Gastrocnemius medialis (tissue), 4 donors: ENCODE measurements at regions of chr1 and their contacts with region 1.

Region 1: GRCh38 chr1:236659792-236660587 is 26.3 kb upstream of the ACTN2 start:
- DNase-seq: no peak
- ATAC-seq: peak; percentile 56 to 76
- H3K4me3 ChIP-seq: no peak overlapping the region
- H3K27ac ChIP-seq: peak overlapping the region; percentile 70 to 80 (median 76)
- H3K4me1 ChIP-seq: peaks cover 11 to 14% of the 10 kb centered on the region in 2 donors
- H3K27me3 ChIP-seq: no peaks in the 10 kb centered on the region
- CTCF ChIP-seq: no peak
- POLR2A ChIP-seq: no peak

Region 2: GRCh38 chr1:236639686-236640085 is 20.3 kb before region 1 on chr1:
- in situ Hi-C with region 1: no loop called
- intact Hi-C with region 1: loop called (anchors 2 kb)
- DNase-seq: no peak
- ATAC-seq: peak; percentile 58 to 59
- H3K4me3 ChIP-seq: peak overlapping the region; percentile 40 to 54 (median 48)
- H3K27ac ChIP-seq: peak overlapping the region; percentile 77 to 85 (median 82)
- H3K4me1 ChIP-seq: peaks cover 20 to 24% of the 10 kb centered on the region in 2 donors
- H3K27me3 ChIP-seq: no peaks in the 10 kb centered on the region
- CTCF ChIP-seq: no peak
- POLR2A ChIP-seq: no peak